Aorta (tissue), 5 donors: ENCODE measurements at regions of chr7 and their contacts with region 1.

Region 1: DNA sequence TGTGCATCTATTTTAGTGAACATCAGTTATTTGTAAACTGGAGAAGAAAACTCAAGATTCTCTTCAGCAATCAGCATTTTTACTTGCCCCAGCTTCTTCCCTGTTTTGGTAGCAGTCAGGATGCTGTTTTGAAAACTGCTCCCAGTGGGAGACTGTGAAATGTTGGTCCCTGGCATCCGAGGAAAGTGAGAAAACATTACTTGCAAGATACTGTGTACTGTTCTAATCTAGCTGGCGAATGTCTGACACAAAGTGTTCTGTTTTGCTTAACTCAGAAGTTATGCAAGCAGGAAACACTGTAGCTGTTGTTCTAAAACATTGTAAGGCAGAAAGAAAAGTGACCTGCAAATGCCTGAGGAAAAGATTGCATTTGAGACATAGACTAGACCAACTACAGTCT is 171.8 kb upstream of the POM121L12 start:
- DNase-seq: no peak
- ATAC-seq: no peak
- H3K4me3 ChIP-seq: no peak overlapping the region
- H3K27ac ChIP-seq: no peak overlapping the region
- H3K4me1 ChIP-seq: no peaks in the 10 kb centered on the region
- H3K27me3 ChIP-seq: no peaks in the 10 kb centered on the region

Region 2: GRCh38 chr7:52917982-52918578 is 54.4 kb after region 1 on chr7:
- intact Hi-C with region 1: loop called in 1 of 2 experiments (anchors 5 kb)
- DNase-seq: no peak
- ATAC-seq: no peak
- H3K4me3 ChIP-seq: no peak overlapping the region
- H3K27ac ChIP-seq: no peak overlapping the region
- H3K4me1 ChIP-seq: no peaks in the 10 kb centered on the region
- H3K27me3 ChIP-seq: no peaks in the 10 kb centered on the region

Region 3: DNA sequence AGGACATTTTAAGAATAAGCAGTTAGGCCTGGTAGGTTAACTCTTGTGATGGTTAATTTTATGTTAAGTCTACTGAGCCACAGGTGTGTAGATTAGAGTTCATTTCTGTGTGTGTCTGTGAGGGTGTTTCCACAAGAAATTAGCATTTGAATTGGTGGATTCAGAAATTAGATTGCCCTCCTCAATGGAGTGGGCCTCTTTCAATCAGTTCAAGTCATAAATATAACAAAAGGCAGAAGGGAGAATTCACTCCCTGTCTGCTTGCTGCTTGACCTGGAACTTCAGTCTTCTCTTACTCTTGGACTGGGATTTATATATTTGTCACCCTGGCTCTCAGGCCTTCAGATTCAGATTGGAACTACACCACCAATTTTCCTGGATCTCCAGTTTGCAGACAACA is 116.5 kb after region 1 on chr7:
- intact Hi-C with region 1: no loop called
- DNase-seq: no peak
- ATAC-seq: no peak
- H3K4me3 ChIP-seq: no peak overlapping the region
- H3K27ac ChIP-seq: no peak overlapping the region
- H3K4me1 ChIP-seq: no peaks in the 10 kb centered on the region
- H3K27me3 ChIP-seq: no peaks in the 10 kb centered on the region